Adrenal gland (tissue), 19 donors: ENCODE measurements at regions of chr5 and their contacts with region 1.

Region 1: GRCh38 chr5:74934949-74935751 is 69.0 kb upstream of the FAM169A start:
- DNase-seq: peak in 2 of 7 donors; percentile 17 to 27
- H3K4me3 ChIP-seq: no peak overlapping the region
- H3K27ac ChIP-seq: no peak overlapping the region
- H3K4me1 ChIP-seq: peaks cover 0 to 8% of the 10 kb centered on the region in 2 donors
- H3K27me3 ChIP-seq: peaks cover 20% of the 10 kb centered on the region
- CTCF ChIP-seq: peak in 4 of 6 experiments; percentile 15 to 34 (median 30)
- POLR2A ChIP-seq: no peak

Region 2: DNA sequence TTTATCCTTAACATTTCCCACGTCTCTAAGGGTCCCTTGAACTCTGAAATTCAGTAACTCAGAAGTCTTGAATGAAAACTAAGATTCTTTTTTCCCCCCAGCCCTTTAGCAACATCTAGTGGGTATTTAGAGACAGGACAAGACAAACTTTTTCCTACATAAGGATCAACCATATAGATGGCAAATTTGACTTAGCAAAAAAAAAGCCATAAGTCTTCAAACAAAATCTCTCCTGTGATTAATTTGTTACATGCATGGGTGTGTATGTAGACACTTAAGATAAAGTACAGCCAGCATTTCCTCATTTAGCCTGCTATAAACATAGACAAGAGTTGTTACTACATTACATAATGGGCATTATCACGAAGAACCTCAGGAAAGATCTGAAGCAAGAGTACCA is 330.6 kb after region 1 on chr5:
- intact Hi-C with region 1: loop called in 1 of 2 experiments (anchors 10 kb)
- DNase-seq: no peak
- H3K4me3 ChIP-seq: no peak overlapping the region
- H3K27ac ChIP-seq: no peak overlapping the region
- H3K4me1 ChIP-seq: no peaks in the 10 kb centered on the region
- H3K27me3 ChIP-seq: no peaks in the 10 kb centered on the region
- CTCF ChIP-seq: peak in 5 of 6 experiments; percentile 30 to 65 (median 50)
- POLR2A ChIP-seq: no peak